Endothelial cell of umbilical vein (primary cell): ENCODE measurements at regions of chr6 and their contacts with region 1.

Region 1: GRCh38 chr6:85482905-85483700 is 33.2 kb downstream of the NT5E start:
- DNase-seq: peak; percentile 80
- H3K4me3 ChIP-seq: no peak overlapping the region
- H3K27ac ChIP-seq: peak overlapping the region; percentile 12
- H3K4me1 ChIP-seq: peaks cover 7% of the 10 kb centered on the region
- H3K27me3 ChIP-seq: no peaks in the 10 kb centered on the region
- CTCF ChIP-seq: peak; percentile 96 to 98
- POLR2A ChIP-seq: no peak

Region 2: DNA sequence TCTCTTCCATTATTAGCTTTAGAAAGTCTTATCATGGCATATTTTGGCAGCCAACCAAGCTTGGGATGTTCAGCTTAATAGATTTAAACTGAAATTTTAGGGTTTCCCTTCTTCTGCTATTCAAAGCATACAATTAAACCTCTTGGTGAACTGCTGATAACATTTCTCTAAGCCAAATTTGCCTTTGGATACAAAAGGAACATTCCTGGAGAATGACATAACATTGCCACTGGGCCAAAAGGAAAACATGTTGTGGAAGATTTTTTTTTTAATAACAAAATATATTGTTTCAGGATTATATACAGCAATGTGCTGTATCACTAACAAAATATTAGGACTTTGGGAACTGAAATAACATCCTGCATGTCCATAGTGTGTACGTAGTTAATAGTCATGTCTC is 503.6 kb before region 1 on chr6:
- CTCF ChIA-PET with region 1: no interaction called
- POLR2A ChIA-PET with region 1: no interaction called
- dilution Hi-C with region 1: no loop called
- intact Hi-C with region 1: no loop called
- DNase-seq: peak; percentile 98
- H3K4me3 ChIP-seq: no peak overlapping the region
- H3K27ac ChIP-seq: peak overlapping the region; percentile 99
- H3K4me1 ChIP-seq: peaks cover 32% of the 10 kb centered on the region
- H3K27me3 ChIP-seq: no peaks in the 10 kb centered on the region
- CTCF ChIP-seq: no peak
- POLR2A ChIP-seq: peak; percentile 40

Region 3: GRCh38 chr6:85354761-85355618 is 128.1 kb before region 1 on chr6:
- CTCF ChIA-PET with region 1: interaction called, 210 read pairs
- POLR2A ChIA-PET with region 1: no interaction called
- dilution Hi-C with region 1: no loop called
- intact Hi-C with region 1: loop called (anchors 1 kb)
- DNase-seq: peak; percentile 78
- H3K4me3 ChIP-seq: no peak overlapping the region
- H3K27ac ChIP-seq: no peak overlapping the region
- H3K4me1 ChIP-seq: no peaks in the 10 kb centered on the region
- H3K27me3 ChIP-seq: no peaks in the 10 kb centered on the region
- CTCF ChIP-seq: peak; percentile 80 to 92
- POLR2A ChIP-seq: no peak

Region 4: DNA sequence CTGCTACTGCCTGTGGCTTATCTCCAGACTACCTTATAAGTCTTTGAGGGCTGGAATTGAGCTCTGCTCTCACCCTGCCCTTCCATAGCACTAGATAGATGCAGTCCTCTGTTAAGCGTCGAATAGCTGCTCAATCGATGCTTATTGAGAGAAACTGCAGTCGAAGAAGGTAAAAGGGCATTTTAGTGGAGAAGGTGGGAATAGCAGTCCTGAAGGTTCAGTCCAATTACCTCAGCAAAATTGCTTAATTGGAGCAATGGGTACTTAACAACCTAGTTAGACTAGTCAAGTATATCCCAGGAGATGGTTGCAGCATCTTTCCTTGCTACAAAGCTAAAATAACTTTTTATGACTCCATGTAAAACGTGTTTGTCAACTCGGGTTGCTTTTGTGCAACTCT is 100.1 kb before region 1 on chr6:
- CTCF ChIA-PET with region 1: interaction called, 18 read pairs
- POLR2A ChIA-PET with region 1: interaction called, 3 read pairs
- dilution Hi-C with region 1: no loop called
- intact Hi-C with region 1: no loop called
- DNase-seq: no peak
- H3K4me3 ChIP-seq: peak overlapping the region in 1 of 3 experiments; percentile 5
- H3K27ac ChIP-seq: peak overlapping the region; percentile 84
- H3K4me1 ChIP-seq: peaks cover 18% of the 10 kb centered on the region
- H3K27me3 ChIP-seq: no peaks in the 10 kb centered on the region
- CTCF ChIP-seq: no peak
- POLR2A ChIP-seq: no peak

Region 5: GRCh38 chr6:85421997-85422401 is 61.1 kb before region 1 on chr6:
- CTCF ChIA-PET with region 1: interaction called, 17 read pairs
- POLR2A ChIA-PET with region 1: no interaction called
- dilution Hi-C with region 1: no loop called
- intact Hi-C with region 1: no loop called
- DNase-seq: peak; percentile 29
- H3K4me3 ChIP-seq: no peak overlapping the region
- H3K27ac ChIP-seq: no peak overlapping the region
- H3K4me1 ChIP-seq: peaks cover 11% of the 10 kb centered on the region
- H3K27me3 ChIP-seq: no peaks in the 10 kb centered on the region
- CTCF ChIP-seq: no peak
- POLR2A ChIP-seq: no peak

Region 6: GRCh38 chr6:85449818-85450759 is 33.0 kb before region 1 on chr6 and contains the start of gene NT5E:
- CTCF ChIA-PET with region 1: interaction called, 541 read pairs
- POLR2A ChIA-PET with region 1: interaction called, 6 read pairs
- dilution Hi-C with region 1: no loop called
- intact Hi-C with region 1: loop called (anchors 1 kb)
- DNase-seq: peak; percentile 79
- H3K4me3 ChIP-seq: peak within 1 kb of the TSS; percentile 61 to 86 (median 69)
- H3K27ac ChIP-seq: peak within 1 kb of the TSS; percentile 84
- H3K4me1 ChIP-seq: peaks cover 23% of the 10 kb centered on the region
- H3K27me3 ChIP-seq: no peaks in the 10 kb centered on the region
- CTCF ChIP-seq: peak in 1 of 2 donors; percentile 1
- POLR2A ChIP-seq: peak; percentile 72
- total RNA-seq, gene NT5E: 48.2 and 115 TPM in 2 replicates

Region 7: DNA sequence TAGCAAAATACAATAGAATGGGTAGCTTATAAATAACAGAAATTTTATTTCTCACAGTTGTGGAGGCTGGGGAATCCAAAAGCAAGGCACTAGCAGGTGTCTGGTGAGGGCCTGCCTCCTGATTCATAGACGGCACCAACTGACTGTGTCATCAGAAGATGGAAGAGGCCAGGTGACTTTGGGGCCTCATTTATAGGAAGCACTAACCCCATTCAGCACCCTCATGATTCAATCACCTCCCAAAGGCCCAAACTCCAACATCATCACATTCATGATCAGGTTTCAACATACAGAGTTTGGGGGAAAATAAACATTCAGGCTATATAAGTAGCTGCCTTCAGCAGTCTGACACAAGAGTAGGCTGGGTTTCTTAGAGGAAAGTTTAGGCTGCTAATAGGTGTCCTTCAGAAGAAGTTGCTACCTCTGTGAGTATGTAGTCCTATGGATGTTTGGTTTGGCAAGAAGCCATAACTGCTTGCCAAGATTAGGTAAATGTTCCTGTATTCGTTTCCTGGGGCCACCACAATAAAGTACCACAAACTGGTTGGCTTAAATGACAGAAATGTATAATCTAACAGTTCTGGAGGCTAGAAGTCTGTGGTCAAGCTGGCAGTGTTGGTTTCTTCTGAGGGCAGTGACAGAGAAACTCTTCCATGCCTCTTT is 15.6 kb after region 1 on chr6:
- CTCF ChIA-PET with region 1: interaction called, 45 read pairs
- POLR2A ChIA-PET with region 1: no interaction called
- dilution Hi-C with region 1: no loop called
- intact Hi-C with region 1: no loop called
- DNase-seq: peak; percentile 43
- H3K4me3 ChIP-seq: no peak overlapping the region
- H3K27ac ChIP-seq: no peak overlapping the region
- H3K4me1 ChIP-seq: peaks cover 7% of the 10 kb centered on the region
- H3K27me3 ChIP-seq: no peaks in the 10 kb centered on the region
- CTCF ChIP-seq: no peak
- POLR2A ChIP-seq: no peak

Region 8: DNA sequence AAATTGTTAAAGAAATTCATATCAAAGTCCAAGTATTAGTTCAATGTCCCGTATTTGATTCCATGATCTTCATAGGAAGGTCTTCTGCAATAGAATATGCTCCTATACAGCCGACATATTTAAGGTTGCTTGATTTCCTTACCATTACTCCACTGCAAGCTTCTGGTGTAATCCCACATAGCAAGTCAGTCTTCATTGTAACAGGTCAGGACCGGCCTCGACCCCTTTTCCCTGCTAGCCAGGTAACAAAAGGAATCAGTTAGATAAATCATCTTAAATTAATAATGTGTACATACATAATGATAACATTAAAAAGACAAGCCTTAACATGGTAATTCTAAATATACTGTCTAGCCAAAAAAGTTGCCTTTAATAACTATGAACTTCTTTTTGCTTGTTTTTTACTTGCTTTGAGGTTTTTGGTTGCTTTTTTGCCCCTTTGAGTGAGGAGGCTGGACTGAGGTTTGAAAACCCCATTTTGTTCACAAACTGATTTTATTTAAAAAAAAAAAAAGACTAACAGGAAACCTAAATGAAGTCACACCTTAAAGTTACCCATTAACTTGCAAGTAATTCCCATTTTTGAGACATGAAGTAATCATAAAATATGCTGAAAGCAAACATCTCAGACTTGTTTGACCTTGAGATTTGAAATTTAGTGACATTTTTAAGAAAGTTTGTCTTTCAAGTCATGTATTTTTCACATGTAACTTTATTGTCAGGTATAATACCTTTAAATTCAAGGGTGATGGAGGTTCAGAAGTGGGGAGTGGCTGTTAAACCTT is 129.8 kb after region 1 on chr6:
- CTCF ChIA-PET with region 1: no interaction called
- POLR2A ChIA-PET with region 1: no interaction called
- dilution Hi-C with region 1: no loop called
- intact Hi-C with region 1: no loop called
- DNase-seq: no peak
- H3K4me3 ChIP-seq: no peak overlapping the region
- H3K27ac ChIP-seq: no peak overlapping the region
- H3K4me1 ChIP-seq: no peaks in the 10 kb centered on the region
- H3K27me3 ChIP-seq: no peaks in the 10 kb centered on the region
- CTCF ChIP-seq: no peak
- POLR2A ChIP-seq: no peak